Left ventricle myocardium inferior (tissue), 1 donor: ENCODE measurements at regions of chr15 and their contacts with region 1.

Region 1: DNA sequence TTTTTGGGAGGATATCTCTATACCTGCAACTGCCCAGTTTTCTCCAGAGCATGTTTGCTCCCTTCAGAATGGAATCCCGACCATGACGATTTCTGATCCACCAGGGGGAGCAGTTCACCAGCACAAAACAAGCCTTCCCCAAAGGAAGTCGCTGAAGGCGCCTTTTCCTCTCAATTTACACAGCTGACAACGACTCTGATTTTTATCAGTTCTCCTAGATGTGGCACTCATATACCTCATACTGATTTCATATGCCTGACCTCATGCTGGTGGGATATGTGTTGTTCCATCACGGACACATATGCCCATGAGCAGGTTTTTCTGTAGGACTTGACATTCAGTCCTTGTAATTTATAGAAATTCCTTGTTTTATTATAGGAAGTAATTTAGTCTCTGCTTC is 1028.2 kb downstream of the MCTP2 start:
- DNase-seq: peak; percentile 35
- H3K4me3 ChIP-seq: no peak overlapping the region
- H3K27ac ChIP-seq: peak overlapping the region; percentile 64
- H3K4me1 ChIP-seq: peaks cover 11% of the 10 kb centered on the region
- H3K27me3 ChIP-seq: peaks cover 9% of the 10 kb centered on the region
- CTCF ChIP-seq: peak; percentile 84

Region 2: DNA sequence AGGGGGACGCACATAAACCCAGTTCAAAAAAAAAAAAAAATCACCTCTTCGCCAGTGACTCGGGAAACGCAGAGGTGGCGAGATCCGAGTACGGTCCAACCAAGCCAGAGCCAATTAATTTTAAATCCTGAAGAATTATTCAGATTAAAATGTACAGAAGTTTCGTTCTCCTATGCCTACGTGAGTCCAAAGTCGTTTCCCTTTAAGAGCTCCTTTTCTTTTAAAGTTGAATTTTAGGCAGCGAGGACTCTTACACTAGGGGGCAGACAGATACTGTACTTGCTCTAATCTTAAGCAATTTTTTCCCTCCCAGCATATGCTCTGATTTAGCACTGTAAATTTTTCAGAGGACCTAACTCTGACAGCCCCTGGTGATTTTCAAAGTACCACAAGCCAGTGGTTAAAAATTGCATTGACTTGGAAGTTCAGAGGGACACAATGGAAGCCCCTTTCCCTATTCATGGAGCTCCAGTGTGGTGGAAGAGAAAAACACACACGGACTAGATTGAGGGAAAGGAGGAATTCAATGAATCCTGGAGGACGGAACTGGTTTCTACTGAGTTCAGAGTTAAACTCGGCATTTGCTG is 1067.7 kb after region 1 on chr15:
- intact Hi-C with region 1: loop called (anchors 10 kb)
- DNase-seq: no peak
- H3K4me3 ChIP-seq: peak overlapping the region; percentile 88
- H3K27ac ChIP-seq: peak overlapping the region; percentile 96
- H3K4me1 ChIP-seq: peaks cover 51% of the 10 kb centered on the region
- H3K27me3 ChIP-seq: peaks cover 84% of the 10 kb centered on the region
- CTCF ChIP-seq: peak; percentile 78

Region 3: DNA sequence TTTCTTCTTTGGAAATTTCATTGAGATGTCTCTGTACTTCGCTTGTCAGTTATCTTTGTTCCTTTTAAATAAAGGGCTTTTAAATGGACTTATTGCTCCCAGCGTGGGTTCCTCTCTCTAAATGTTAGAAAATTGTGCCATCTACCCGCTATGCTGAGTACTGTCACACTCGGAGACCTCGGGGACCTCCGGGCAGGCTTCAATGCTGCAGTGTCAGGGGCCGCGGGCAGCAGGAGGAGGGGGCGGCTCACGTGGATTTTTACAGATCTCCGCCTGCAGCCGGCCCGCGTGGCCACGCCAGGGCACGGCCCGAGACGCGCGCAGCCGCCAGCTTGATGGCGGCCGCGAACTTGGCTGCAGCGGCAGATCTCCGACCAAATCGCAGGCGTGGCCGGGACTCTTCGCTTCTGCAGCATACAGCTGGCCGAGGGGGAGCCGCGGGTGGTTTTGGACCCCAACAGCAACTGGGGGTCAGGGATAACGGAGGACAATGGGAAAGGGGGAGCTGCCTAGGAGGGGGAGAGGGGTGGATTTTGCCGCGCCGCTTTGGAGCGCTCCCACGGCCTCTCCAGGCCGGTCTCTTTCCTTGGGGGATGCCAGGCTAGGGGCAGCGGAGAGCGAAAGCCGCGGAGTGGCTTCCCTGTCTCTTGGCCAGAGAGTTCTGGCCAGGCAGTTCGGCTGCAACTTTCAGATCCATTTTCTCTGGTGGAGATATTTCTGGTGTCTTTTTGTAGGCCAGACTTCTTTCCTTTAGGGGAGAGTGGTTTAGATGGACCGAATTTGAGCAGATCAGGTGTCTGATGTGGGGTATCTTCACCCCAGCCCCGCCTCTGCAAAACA is 1086.3 kb after region 1 on chr15:
- intact Hi-C with region 1: loop called (anchors 10 kb)
- DNase-seq: peak; percentile 77
- H3K4me3 ChIP-seq: peak overlapping the region; percentile 88
- H3K27ac ChIP-seq: peak overlapping the region; percentile 96
- H3K4me1 ChIP-seq: peaks cover 75% of the 10 kb centered on the region
- H3K27me3 ChIP-seq: peaks cover 82% of the 10 kb centered on the region
- CTCF ChIP-seq: peak; percentile 79

Region 4: DNA sequence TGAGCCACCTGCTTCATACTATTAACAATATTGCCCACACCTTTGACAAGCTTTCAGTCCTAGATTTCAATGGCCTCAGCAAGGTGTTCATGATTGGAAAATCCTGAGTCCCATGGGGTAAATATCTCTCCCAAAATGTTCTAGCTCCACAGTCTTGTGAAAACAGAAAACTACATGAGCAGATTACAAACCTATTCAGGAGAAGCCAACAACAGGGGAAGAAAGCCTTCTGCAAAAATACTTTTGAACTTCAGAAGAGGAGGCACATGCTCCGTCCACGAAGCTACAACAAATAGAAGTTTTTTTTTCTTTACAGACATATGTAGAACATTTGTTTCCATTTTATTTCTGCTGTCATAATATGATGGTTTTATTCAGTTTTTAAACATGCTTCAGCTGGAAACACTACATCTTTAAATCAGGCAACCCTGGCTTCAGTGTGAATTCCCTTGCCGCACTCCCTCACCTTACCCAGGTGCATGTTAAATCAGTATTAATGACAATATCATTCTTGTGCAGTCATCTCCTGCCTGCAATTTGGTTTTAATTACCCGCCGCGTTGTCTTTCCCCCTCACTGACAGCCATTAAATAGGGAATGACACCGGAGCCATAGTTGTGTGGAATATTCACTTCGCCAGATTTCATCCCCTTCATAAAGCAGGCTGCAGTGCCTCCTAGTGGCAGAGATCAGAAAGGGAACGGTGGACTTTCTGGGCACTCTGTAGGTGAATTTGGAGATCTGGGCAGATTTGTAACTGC is 1975.5 kb after region 1 on chr15:
- intact Hi-C with region 1: loop called (anchors 5 kb)
- DNase-seq: peak; percentile 26
- H3K4me3 ChIP-seq: peak overlapping the region; percentile 6
- H3K27ac ChIP-seq: no peak overlapping the region
- H3K4me1 ChIP-seq: peaks cover 3% of the 10 kb centered on the region
- H3K27me3 ChIP-seq: peaks cover 16% of the 10 kb centered on the region
- CTCF ChIP-seq: peak; percentile 87